ENCODE measurements at regions of chr3 and their contacts with region 1.

Region 1: GRCh38 chr3:177571944-177572315 is 374.6 kb upstream of the TBL1XR1 start:
- DNase-seq: no peak
- H3K4me3 ChIP-seq: no peak overlapping the region
- H3K27ac ChIP-seq: no peak overlapping the region
- H3K4me1 ChIP-seq: no peaks in the 10 kb centered on the region
- H3K27me3 ChIP-seq: no peaks in the 10 kb centered on the region
- CTCF ChIP-seq: no peak
- POLR2A ChIP-seq: no peak

Region 2: DNA sequence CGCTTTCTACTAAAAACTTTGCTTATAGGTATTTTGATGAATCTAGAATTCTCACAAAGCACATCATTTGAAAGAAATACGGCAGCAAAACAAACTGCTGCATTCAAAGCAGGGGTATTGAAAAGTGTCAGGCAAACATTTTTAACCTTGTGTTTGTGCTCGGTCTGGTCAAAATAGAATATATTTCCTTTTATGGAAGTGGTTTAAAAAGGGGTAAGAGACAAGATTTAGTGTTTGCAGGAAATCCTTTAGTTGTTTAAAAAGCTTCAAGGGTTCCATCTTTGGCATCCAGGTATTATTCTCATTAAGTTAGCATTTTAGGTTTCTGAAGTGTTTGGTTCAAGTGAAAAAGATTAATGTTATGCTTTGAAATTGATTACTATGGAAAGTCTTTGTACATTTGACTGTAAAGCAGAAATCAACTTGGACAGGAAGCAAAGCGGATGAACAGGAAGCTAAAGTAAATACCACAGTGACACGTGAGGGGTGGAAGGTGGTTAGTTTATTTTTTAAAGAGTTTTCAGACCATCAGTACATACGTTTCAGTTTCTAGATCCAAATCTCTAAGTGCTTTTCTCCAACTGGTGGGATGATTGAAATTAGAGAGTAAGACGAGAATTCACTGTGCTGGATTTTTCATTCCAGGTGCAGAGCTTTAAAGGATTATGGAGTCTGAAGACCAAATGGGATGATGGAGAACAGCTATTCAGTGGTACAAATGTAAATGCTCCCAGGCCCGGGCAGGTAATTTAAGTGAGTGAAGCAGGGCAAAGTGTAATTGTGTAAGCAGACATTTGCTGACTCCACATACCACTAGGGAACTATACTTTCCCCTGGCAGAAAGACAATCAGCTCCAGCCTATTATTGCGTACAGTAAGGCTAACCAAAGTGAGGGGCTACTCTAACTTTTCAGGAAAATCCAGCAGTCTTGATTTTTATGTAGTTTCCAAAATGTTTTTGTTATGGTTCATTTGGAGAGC is 32.9 kb before region 1 on chr3:
- CTCF ChIA-PET with region 1: interaction called, 4 read pairs
- POLR2A ChIA-PET with region 1: no interaction called
- dilution Hi-C with region 1: no loop called
- intact Hi-C with region 1: loop called (anchors 2 kb)
- DNase-seq: peak; percentile 44
- H3K4me3 ChIP-seq: no peak overlapping the region
- H3K27ac ChIP-seq: no peak overlapping the region
- H3K4me1 ChIP-seq: peaks cover 15% of the 10 kb centered on the region
- H3K27me3 ChIP-seq: no peaks in the 10 kb centered on the region
- CTCF ChIP-seq: no peak
- POLR2A ChIP-seq: no peak

Region 3: GRCh38 chr3:177657243-177657642 is 85.3 kb after region 1 on chr3:
- CTCF ChIA-PET with region 1: no interaction called
- POLR2A ChIA-PET with region 1: no interaction called
- dilution Hi-C with region 1: no loop called
- intact Hi-C with region 1: no loop called
- DNase-seq: no peak
- H3K4me3 ChIP-seq: no peak overlapping the region
- H3K27ac ChIP-seq: no peak overlapping the region
- H3K4me1 ChIP-seq: no peaks in the 10 kb centered on the region
- H3K27me3 ChIP-seq: no peaks in the 10 kb centered on the region
- CTCF ChIP-seq: no peak
- POLR2A ChIP-seq: no peak

Region 4: DNA sequence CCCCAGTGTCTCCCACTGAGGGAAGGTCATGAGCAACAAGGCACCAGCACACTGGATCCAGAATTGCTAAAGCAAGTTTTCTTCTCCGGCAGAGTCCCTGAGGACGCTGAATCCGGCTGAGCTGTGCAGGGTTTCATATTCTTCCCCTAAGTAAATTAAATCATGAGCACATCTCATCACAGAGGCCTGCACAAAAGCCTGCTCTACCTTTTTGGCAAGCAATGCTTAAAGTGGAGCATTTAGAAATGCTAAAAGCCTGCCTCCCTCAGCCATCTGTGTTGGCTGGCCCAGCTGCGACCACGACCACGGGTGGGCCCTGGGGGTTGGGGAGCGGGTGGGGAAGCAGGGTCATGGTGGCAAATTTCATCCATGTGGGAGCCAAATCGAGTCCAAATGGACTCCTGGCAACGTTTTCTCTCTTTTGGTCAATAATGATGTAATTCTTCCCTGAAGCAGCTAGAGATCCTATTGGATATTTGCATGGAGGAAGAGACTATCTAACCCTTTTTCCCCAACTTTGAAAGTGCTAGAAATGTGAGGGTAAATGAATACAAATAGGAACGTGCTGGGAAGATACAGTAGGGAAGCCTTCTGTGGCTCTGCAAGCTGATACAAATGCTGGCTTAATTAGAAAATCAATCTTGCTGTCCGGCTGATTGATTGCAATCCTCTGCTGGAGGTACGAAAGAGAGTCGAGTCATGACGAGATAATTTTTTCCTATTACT is 158.2 kb after region 1 on chr3:
- CTCF ChIA-PET with region 1: no interaction called
- POLR2A ChIA-PET with region 1: no interaction called
- dilution Hi-C with region 1: no loop called
- intact Hi-C with region 1: no loop called
- DNase-seq: no peak
- H3K4me3 ChIP-seq: no peak overlapping the region
- H3K27ac ChIP-seq: no peak overlapping the region
- H3K4me1 ChIP-seq: no peaks in the 10 kb centered on the region
- H3K27me3 ChIP-seq: no peaks in the 10 kb centered on the region
- CTCF ChIP-seq: no peak
- POLR2A ChIP-seq: no peak

Measured in endothelial cell of umbilical vein (primary cell).